ENCODE measurements at regions of chrX and their contacts with region 1.

Region 1: DNA sequence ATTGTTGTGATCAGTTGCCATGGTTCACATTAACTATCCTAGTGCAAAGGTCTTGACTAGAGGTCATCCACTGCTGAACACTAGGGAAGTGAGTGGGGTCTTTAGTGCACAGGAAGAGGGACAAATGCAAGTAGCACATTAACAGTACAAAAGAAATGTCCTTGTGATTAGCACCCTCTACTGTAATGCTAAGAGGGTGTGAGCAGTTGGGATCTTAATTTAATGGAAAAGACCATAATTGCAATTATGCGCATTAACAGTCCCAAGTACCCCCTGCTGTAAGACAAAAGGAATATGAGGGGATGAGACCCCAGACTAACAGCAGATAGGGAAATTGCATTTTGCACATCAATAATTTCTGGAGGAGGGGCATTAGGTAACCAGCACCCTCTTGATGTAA is 284.9 kb downstream of the CHIC1 start:
- DNase-seq: no peak
- CTCF ChIP-seq: no peak

Region 2: GRCh38 chrX:73943693-73944562 is 96.0 kb after region 1 on chrX:
- in situ Hi-C with region 1: loop called (anchors 25 kb)
- DNase-seq: peak; percentile 87
- CTCF ChIP-seq: no peak